Esophagus muscularis mucosa (tissue), 4 donors: ENCODE measurements at regions of chr11 and their contacts with region 1.

Region 1: GRCh38 chr11:11841723-11842420 is at the start of gene USP47:
- DNase-seq: peak; percentile 98
- H3K4me3 ChIP-seq: peak within 1 kb of the TSS; percentile 81 to 90 (median 83)
- H3K27ac ChIP-seq: peak within 1 kb of the TSS; percentile 96 to 99 (median 98)
- H3K4me1 ChIP-seq: peaks cover 29 to 44% (median 38%) of the 10 kb centered on the region in 4 donors
- H3K27me3 ChIP-seq: no peaks in the 10 kb centered on the region
- CTCF ChIP-seq: peak in 2 of 3 experiments; percentile 57 to 71
- EP300 ChIP-seq: no peak
- POLR2A ChIP-seq: peak; percentile 80
- total RNA-seq, gene USP47: 86.2 to 112 (median 96.5) TPM

Region 2: GRCh38 chr11:11780858-11781257 is 61.0 kb before region 1 on chr11:
- intact Hi-C with region 1: no loop called
- DNase-seq: peak; percentile 68
- H3K4me3 ChIP-seq: no peak overlapping the region
- H3K27ac ChIP-seq: no peak overlapping the region
- H3K4me1 ChIP-seq: no peaks in the 10 kb centered on the region
- H3K27me3 ChIP-seq: no peaks in the 10 kb centered on the region
- CTCF ChIP-seq: no peak
- EP300 ChIP-seq: no peak
- POLR2A ChIP-seq: no peak

Region 3: GRCh38 chr11:11909727-11910126 is 67.9 kb after region 1 on chr11:
- intact Hi-C with region 1: loop called (anchors 10 kb)
- DNase-seq: no peak
- H3K4me3 ChIP-seq: no peak overlapping the region
- H3K27ac ChIP-seq: peak overlapping the region; percentile 53 to 75 (median 66)
- H3K4me1 ChIP-seq: peaks cover 0 to 30% (median 20%) of the 10 kb centered on the region in 4 donors
- H3K27me3 ChIP-seq: no peaks in the 10 kb centered on the region
- CTCF ChIP-seq: no peak
- EP300 ChIP-seq: no peak
- POLR2A ChIP-seq: no peak